Prostate gland (tissue), 2 donors: ENCODE measurements at regions of chr17 and their contacts with region 1.

Region 1: DNA sequence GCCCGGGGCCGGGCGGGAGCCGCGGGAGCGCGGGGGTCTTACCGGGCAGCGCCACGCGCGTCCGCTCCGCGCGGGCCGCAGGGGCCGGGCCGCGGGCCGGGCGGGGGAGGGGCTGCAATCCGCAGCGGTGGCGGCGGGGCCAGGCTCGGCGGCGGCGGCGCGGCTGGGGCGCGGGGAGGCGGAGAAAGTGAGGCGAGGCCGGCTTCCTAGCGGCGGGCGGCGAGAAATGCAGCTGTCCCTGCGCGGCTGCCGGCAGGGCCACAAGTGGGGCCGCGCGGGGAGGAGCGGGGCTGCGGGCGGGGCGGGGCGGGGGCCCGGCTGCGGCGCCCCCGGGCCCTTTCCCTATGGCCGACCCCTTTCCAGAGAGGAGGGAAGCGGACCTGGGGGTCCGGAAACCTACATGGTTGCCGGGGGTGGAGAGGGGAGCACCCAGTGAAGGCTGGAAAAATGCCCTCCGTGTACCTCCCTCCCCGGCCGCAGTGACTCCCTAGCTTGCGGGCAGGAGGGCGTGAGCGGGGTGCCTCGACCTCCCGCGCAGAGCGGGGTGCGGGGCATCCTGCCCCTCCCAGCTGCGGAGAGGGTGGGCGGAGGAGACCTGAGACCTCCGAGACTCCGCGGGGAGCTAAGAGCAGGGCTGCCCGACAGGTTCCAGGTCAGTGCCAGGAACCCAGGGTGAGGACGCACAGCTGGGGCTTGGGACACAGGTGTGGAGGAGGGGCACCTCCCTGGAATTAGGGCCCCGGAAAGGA is at the start of gene CUEDC1:
- DNase-seq: peak; percentile 67
- H3K4me3 ChIP-seq: peak within 1 kb of the TSS; percentile 93 to 94
- H3K27ac ChIP-seq: peak within 1 kb of the TSS; percentile 96 to 97
- H3K4me1 ChIP-seq: peaks cover 3% of the 10 kb centered on the region
- H3K27me3 ChIP-seq: no peaks in the 10 kb centered on the region
- CTCF ChIP-seq: peak in 2 of 4 experiments; percentile 26 to 48
- POLR2A ChIP-seq: no peak
- total RNA-seq, gene CUEDC1: 33.0 to 44.9 TPM

Region 2: DNA sequence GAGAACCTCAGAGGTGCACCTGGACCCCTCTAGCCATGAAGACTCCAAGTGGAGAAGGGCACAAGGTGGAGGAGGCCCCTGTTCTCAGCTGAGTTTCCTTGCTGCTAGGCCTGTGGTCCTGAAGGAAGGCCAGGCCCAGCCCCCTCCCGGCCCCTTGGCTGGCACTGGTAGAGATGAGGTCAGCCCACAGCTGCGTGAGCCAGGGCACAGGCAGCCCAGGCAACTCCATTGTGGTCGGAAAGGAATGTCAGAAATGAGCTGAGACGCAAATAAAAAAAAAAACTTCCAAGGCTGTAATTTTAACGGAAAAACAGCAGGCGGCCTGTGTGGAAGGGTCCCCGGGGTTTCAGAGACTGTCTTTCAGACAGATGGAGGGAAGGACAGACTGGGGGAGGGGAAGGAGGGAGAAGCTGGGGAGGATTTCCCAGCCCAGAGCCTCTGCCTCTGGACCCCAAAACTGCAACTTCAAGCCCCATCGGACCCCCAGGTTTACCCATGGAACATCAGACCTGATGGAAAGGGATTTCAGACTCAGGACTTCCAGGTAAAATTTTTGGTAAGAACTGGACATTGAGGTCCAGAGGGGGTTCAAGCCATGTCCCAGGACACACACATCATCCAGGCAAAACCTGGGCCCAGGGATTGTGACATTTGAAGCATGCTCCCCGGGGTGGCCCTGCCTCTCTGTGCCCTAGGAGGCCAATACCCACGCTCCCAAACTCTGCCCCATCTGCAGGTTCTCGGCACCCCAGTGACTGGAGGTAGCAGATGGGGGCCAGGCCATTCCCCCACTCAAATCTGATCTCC is 79.8 kb before region 1 on chr17:
- intact Hi-C with region 1: loop called (anchors 5 kb)
- DNase-seq: peak; percentile 52
- H3K4me3 ChIP-seq: no peak overlapping the region
- H3K27ac ChIP-seq: peak overlapping the region; percentile 57 to 70
- H3K4me1 ChIP-seq: peaks cover 21% of the 10 kb centered on the region
- H3K27me3 ChIP-seq: no peaks in the 10 kb centered on the region
- CTCF ChIP-seq: peak in 2 of 4 experiments; percentile 16 to 18
- POLR2A ChIP-seq: no peak

Region 3: DNA sequence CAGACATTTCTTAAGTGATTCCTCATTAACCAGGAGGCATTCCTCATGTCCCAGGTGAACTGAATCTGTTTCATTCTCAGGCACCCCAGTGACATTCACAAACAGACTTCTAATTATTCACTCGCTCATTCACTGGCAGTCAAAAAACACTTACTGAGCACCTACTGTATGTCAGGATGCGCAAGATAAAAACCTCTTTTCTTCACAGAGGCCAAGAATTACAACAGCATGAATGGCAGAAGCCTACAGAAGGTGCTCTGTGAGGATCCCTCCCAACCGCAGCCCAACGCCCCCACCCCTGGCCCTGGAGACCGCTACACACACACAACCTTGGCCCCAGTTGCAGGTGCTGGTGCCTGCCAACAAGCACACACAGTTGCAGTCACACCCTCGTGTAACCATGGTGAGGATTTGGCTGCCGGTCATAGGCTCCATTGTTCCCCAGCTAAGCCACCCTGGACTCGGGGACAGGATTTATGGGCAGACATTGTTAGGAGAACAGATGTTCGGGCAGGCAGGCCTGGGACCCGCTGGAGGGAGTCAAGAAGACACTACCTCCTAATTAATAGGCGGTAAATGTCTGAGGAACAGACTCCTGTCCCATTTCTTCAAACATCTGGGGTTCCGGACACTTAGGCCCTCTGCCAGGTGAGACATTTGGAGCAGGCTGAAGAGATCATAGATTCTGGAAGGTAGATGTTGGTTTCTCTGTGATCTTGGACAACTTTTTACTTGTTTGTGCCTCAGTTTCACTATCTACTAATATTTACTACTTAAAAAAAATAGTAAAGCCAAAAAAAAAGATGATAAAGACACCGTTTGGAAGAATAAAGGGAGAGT is 43.3 kb before region 1 on chr17:
- intact Hi-C with region 1: loop called (anchors 5 kb)
- DNase-seq: peak; percentile 96
- H3K4me3 ChIP-seq: no peak overlapping the region
- H3K27ac ChIP-seq: peak overlapping the region; percentile 72 to 77
- H3K4me1 ChIP-seq: peaks cover 27% of the 10 kb centered on the region
- H3K27me3 ChIP-seq: no peaks in the 10 kb centered on the region
- CTCF ChIP-seq: no peak
- POLR2A ChIP-seq: no peak

Region 4: GRCh38 chr17:57970706-57971105 is 15.3 kb after region 1 on chr17:
- intact Hi-C with region 1: no loop called
- DNase-seq: no peak
- H3K4me3 ChIP-seq: no peak overlapping the region
- H3K27ac ChIP-seq: no peak overlapping the region
- H3K4me1 ChIP-seq: peaks cover 6% of the 10 kb centered on the region
- H3K27me3 ChIP-seq: no peaks in the 10 kb centered on the region
- CTCF ChIP-seq: no peak
- POLR2A ChIP-seq: no peak

Region 5: DNA sequence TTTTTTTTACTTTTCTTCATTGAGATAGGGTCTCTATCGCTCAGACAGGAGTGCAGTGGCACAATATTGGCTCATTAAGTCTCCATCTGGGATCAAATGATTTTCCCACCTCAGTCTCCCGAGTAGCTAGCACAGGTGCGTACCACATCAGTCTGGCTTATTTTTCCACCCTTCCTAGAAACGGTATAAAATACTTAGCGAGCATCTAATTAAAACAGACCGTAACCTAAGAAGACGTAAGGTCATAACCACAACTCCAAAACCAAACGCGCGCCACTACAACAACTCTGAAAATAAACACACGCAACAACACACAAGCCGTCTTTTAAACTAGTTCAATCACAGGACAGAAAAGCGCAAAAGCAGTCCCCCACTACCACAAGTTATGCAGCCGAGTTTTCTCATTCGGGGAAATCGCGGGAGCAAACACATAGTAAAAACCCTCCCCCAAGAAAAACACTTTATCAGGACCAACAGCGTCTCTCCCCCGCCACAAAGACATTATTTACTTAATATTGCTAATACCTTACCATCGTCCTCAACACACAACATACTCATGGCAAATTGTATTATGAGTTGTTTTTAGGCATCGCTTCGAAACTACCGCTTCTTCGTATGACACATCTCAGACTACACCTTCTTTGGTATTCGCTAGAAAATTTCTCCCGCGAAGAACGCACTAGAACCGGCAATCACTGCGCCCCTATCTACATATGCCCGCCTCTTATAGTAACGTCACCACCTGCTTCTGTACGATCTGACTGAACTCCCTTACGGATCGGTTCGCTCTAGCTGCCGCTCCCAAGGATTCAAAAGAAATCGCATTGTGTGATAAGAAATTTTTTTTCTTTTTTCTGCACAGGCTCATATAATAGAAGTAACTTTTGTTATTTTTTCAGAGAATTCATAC is 703.7 kb after region 1 on chr17:
- intact Hi-C with region 1: no loop called
- DNase-seq: peak; percentile 70
- H3K4me3 ChIP-seq: peak overlapping the region; percentile 21 to 26
- H3K27ac ChIP-seq: peak overlapping the region; percentile 82 to 86
- H3K4me1 ChIP-seq: no peaks in the 10 kb centered on the region
- H3K27me3 ChIP-seq: no peaks in the 10 kb centered on the region
- CTCF ChIP-seq: peak in 2 of 4 experiments; percentile 51 to 62
- POLR2A ChIP-seq: peak; percentile 93